Caco-2 (cell line): ENCODE measurements at regions of chr13 and their contacts with region 1.

Region 1: DNA sequence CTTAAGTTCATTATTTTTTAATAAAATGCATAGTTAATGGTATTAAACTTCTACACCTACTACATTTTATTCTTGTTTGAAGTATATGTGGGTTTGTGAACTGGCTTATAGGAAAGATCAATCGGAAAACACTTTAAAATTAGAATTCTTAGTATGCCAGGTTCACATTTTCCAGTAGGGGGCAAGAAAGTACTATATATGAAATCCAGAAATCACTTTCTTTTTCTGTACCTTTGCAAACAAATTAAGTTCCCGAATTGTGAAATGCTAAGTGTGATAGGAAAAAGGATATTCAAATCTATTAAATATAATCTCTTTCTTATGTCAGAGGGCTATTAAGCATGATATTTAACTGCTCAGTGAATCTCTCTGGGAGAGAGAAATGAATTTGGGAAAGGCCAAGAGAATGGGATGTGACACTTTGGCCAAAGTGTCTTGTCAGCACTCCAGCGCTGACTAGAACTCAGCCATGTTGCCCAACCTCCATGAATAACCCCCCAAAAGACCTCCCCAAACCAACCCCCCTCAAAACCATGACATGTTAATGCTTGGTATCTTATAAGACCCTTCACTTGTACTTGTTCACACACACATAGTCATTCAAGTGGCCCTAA is 122.6 kb upstream of the SLC10A2 start:
- DNase-seq: peak in 1 of 2 experiments; percentile 15
- H3K4me3 ChIP-seq: no peak overlapping the region
- H3K4me3 Mint-ChIP-seq: no peak overlapping the region
- H3K27ac Mint-ChIP-seq: no peak overlapping the region
- H3K4me1 ChIP-seq: no peaks in the 10 kb centered on the region
- H3K4me1 Mint-ChIP-seq: no peaks in the 10 kb centered on the region
- H3K27me3 ChIP-seq: no peaks in the 10 kb centered on the region
- H3K27me3 Mint-ChIP-seq: no peaks in the 10 kb centered on the region
- CTCF ChIP-seq: peak; percentile 55 to 74

Region 2: GRCh38 chr13:102913914-102914313 is 274.9 kb before region 1 on chr13:
- CTCF ChIA-PET with region 1: no interaction called
- POLR2A ChIA-PET with region 1: no interaction called
- intact Hi-C with region 1: loop called (anchors 2 kb)
- DNase-seq: no peak
- H3K4me3 ChIP-seq: no peak overlapping the region
- H3K4me3 Mint-ChIP-seq: no peak overlapping the region
- H3K27ac Mint-ChIP-seq: no peak overlapping the region
- H3K4me1 ChIP-seq: peaks cover 8% of the 10 kb centered on the region; the same call in 1 of the 2 replicates
- H3K4me1 Mint-ChIP-seq: peaks cover 17% of the 10 kb centered on the region
- H3K27me3 ChIP-seq: no peaks in the 10 kb centered on the region
- H3K27me3 Mint-ChIP-seq: no peaks in the 10 kb centered on the region
- CTCF ChIP-seq: no peak

Region 3: GRCh38 chr13:103510007-103510535 is 321.3 kb after region 1 on chr13:
- CTCF ChIA-PET with region 1: no interaction called
- POLR2A ChIA-PET with region 1: no interaction called
- intact Hi-C with region 1: loop called (anchors 5 kb)
- DNase-seq: peak in 1 of 2 experiments; percentile 10
- H3K4me3 ChIP-seq: no peak overlapping the region
- H3K4me3 Mint-ChIP-seq: no peak overlapping the region
- H3K27ac Mint-ChIP-seq: no peak overlapping the region
- H3K4me1 ChIP-seq: no peaks in the 10 kb centered on the region
- H3K4me1 Mint-ChIP-seq: no peaks in the 10 kb centered on the region
- H3K27me3 ChIP-seq: no peaks in the 10 kb centered on the region
- H3K27me3 Mint-ChIP-seq: no peaks in the 10 kb centered on the region
- CTCF ChIP-seq: peak in 1 of 2 experiments; percentile 50

Region 4: GRCh38 chr13:103788061-103788652 is 599.3 kb after region 1 on chr13:
- CTCF ChIA-PET with region 1: no interaction called
- POLR2A ChIA-PET with region 1: no interaction called
- intact Hi-C with region 1: loop called (anchors 1 kb)
- DNase-seq: no peak
- H3K4me3 ChIP-seq: no peak overlapping the region
- H3K4me3 Mint-ChIP-seq: no peak overlapping the region
- H3K27ac Mint-ChIP-seq: no peak overlapping the region
- H3K4me1 ChIP-seq: no peaks in the 10 kb centered on the region
- H3K4me1 Mint-ChIP-seq: no peaks in the 10 kb centered on the region
- H3K27me3 ChIP-seq: no peaks in the 10 kb centered on the region
- H3K27me3 Mint-ChIP-seq: no peaks in the 10 kb centered on the region
- CTCF ChIP-seq: no peak